Activated T-helper 1 cell treated with anti-CD3 and anti-CD28 coated beads, Interleukin-12 subunit alpha, Interleukin-12 subunit beta, Interleukin-2, Interleukin-4 antibody, amounts not matched to agents 30 ng/mL and 10 ng/mL and 1 ng/mL, durations not matched to agents 14 hours and 24 hours and 36 hours (primary cell): ENCODE measurements at regions of chr20 and their contacts with region 1.

Region 1: GRCh38 chr20:59159493-59160376 is 3.9 kb upstream of the ZNF831 start:
- DNase-seq: peak; percentile 52
- H3K4me3 Mint-ChIP-seq: peak overlapping the region; percentile 78
- H3K27ac Mint-ChIP-seq: peak overlapping the region; percentile 92
- H3K4me1 Mint-ChIP-seq: peaks cover 80% of the 10 kb centered on the region
- H3K27me3 Mint-ChIP-seq: no peaks in the 10 kb centered on the region

Region 2: DNA sequence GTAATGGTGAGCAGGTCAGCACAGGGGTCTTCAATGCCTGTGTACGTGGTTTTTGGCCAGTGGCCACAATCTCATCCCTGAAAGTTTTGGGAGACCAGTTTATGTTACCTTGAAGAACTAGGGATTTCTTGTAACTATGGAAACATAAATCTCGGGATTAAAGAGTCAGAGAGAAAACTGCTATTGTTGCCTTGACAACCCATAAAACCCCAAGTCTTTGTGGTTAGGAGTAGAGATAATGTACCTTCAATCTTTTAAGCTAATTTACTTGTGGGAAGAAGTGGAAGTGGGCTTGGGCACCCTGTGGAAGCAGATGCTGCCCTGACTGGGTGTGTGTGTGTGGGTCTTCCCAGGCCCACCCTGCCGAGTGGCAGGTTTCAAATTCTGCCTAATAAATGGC is 42.2 kb before region 1 on chr20:
- intact Hi-C with region 1: no loop called
- DNase-seq: no peak
- H3K4me3 Mint-ChIP-seq: no peak overlapping the region
- H3K27ac Mint-ChIP-seq: no peak overlapping the region
- H3K4me1 Mint-ChIP-seq: peaks cover 44% of the 10 kb centered on the region
- H3K27me3 Mint-ChIP-seq: peaks cover 5% of the 10 kb centered on the region

Region 3: GRCh38 chr20:59207742-59208357 is 48.1 kb after region 1 on chr20:
- intact Hi-C with region 1: loop called (anchors 5 kb)
- DNase-seq: peak; percentile 65
- H3K4me3 Mint-ChIP-seq: no peak overlapping the region
- H3K27ac Mint-ChIP-seq: peak overlapping the region; percentile 49
- H3K4me1 Mint-ChIP-seq: peaks cover 13% of the 10 kb centered on the region
- H3K27me3 Mint-ChIP-seq: no peaks in the 10 kb centered on the region

Region 4: DNA sequence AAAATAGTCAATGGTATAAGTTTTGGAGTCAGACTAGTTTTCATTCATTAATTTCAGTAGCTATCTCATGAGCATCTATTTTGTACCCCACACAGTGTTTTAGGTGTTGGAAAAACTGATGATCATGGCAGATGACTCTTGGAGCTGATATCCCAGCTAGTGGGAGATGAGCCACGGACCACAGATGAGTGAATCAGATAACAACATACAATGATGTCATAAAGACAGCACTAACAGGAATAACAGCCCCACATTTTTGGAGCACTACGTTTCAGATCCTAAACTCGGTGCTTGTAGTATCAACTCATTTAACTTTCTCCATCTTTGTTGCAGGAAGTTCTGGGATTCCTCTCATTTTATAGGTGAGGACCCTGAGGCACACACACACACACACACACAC is 72.9 kb after region 1 on chr20:
- intact Hi-C with region 1: no loop called
- DNase-seq: no peak
- H3K4me3 Mint-ChIP-seq: no peak overlapping the region
- H3K27ac Mint-ChIP-seq: no peak overlapping the region
- H3K4me1 Mint-ChIP-seq: peaks cover 25% of the 10 kb centered on the region
- H3K27me3 Mint-ChIP-seq: no peaks in the 10 kb centered on the region

Region 5: GRCh38 chr20:59253779-59254319 is 94.1 kb after region 1 on chr20:
- intact Hi-C with region 1: loop called (anchors 5 kb)
- DNase-seq: peak; percentile 27
- H3K4me3 Mint-ChIP-seq: peak overlapping the region; percentile 72
- H3K27ac Mint-ChIP-seq: peak overlapping the region; percentile 91
- H3K4me1 Mint-ChIP-seq: peaks cover 48% of the 10 kb centered on the region
- H3K27me3 Mint-ChIP-seq: peaks cover 3% of the 10 kb centered on the region